ENCODE measurements at regions of chr22 and their contacts with region 1.

Region 1: GRCh38 chr22:39319270-39320022 is at the start of gene RPL3:
- DNase-seq: peak; percentile 96 to 100 (median 98)
- ATAC-seq: peak; percentile 85
- H3K4me3 ChIP-seq: peak within 1 kb of the TSS; percentile 91 to 99
- H3K4me3 Mint-ChIP-seq: peak within 1 kb of the TSS; percentile 96
- H3K27ac ChIP-seq: peak within 1 kb of the TSS; percentile 81 to 90
- H3K27ac Mint-ChIP-seq: peak within 1 kb of the TSS; percentile 96
- H3K4me1 ChIP-seq: peaks cover 45% of the 10 kb centered on the region
- H3K4me1 Mint-ChIP-seq: peaks cover 46% of the 10 kb centered on the region
- H3K27me3 ChIP-seq: no peaks in the 10 kb centered on the region
- H3K27me3 Mint-ChIP-seq: no peaks in the 10 kb centered on the region
- CTCF ChIP-seq: no peak
- total RNA-seq, gene RPL3: 3,777 to 3,874 TPM

Region 2: DNA sequence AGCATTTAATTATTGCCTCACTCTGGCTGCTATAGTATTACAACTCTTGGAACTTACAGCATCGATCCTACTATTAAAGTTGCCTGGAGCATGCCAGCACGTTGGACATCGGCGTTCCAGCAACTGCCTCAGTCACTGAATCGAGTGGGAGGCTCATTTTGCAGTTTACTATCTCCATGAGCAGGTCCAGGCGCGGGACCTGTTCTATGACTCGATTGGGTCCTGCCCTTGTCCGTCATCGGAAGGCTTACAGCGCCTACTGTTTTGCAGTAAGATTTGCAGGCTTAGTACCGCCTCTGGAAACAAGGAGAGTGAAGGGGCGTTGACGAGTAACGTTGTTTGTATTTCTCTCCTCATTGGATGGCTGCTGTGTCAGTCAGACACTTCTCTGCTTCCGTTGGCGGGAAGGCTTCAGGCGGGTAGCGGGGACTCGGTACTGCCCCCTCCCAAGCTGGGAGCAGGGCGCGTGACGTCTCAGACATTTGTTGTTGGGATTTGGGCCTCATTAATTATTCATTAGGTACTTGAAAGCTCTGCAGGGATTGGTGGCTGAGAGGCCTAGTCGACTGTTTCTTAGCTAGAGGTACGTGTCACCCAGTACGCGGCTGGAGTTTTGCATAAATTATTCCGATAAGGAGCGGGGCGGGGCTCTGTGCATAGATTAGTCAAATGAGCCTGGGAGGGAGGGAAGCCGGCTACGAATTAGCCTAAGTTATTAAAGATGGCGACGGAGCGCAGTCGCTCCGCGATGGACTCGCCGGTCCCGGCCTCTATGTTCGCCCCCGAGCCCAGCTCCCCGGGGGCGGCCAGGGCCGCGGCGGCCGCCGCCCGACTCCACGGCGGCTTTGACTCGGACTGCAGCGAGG is 614.0 kb before region 1 on chr22 and contains the start of gene GTPBP1:
- CTCF ChIA-PET with region 1: interaction called, 3 read pairs
- POLR2A ChIA-PET with region 1: interaction called, 4 read pairs
- intact Hi-C with region 1: loop called in 1 of 2 experiments (anchors 2 kb)
- DNase-seq: peak; percentile 91 to 100 (median 95)
- ATAC-seq: peak; percentile 76
- H3K4me3 ChIP-seq: peak within 1 kb of the TSS; percentile 63 to 84
- H3K4me3 Mint-ChIP-seq: peak within 1 kb of the TSS; percentile 93
- H3K27ac ChIP-seq: peak within 1 kb of the TSS; percentile 69 to 77
- H3K27ac Mint-ChIP-seq: peak within 1 kb of the TSS; percentile 95
- H3K4me1 ChIP-seq: peaks cover 47% of the 10 kb centered on the region
- H3K4me1 Mint-ChIP-seq: peaks cover 64% of the 10 kb centered on the region
- H3K27me3 ChIP-seq: no peaks in the 10 kb centered on the region
- H3K27me3 Mint-ChIP-seq: no peaks in the 10 kb centered on the region
- CTCF ChIP-seq: no peak
- total RNA-seq, gene GTPBP1: 341 to 346 TPM

Region 3: GRCh38 chr22:39144101-39144767 is 175.2 kb before region 1 on chr22:
- CTCF ChIA-PET with region 1: interaction called, 3 read pairs
- POLR2A ChIA-PET with region 1: interaction called, 14 read pairs
- intact Hi-C with region 1: loop called in 1 of 2 experiments (anchors 1 kb)
- DNase-seq: peak in 8 of 9 experiments; percentile 38 to 91 (median 64)
- ATAC-seq: peak; percentile 39
- H3K4me3 ChIP-seq: peak overlapping the region; percentile 72 to 99
- H3K4me3 Mint-ChIP-seq: peak overlapping the region; percentile 92
- H3K27ac ChIP-seq: peak overlapping the region; percentile 79 to 90
- H3K27ac Mint-ChIP-seq: peak overlapping the region; percentile 93
- H3K4me1 ChIP-seq: peaks cover 33% of the 10 kb centered on the region
- H3K4me1 Mint-ChIP-seq: peaks cover 46% of the 10 kb centered on the region
- H3K27me3 ChIP-seq: no peaks in the 10 kb centered on the region
- H3K27me3 Mint-ChIP-seq: no peaks in the 10 kb centered on the region
- CTCF ChIP-seq: no peak

Region 4: GRCh38 chr22:39240828-39241793 is 78.3 kb before region 1 on chr22:
- CTCF ChIA-PET with region 1: interaction called, 16 read pairs
- POLR2A ChIA-PET with region 1: interaction called, 14 read pairs
- intact Hi-C with region 1: loop called (anchors 1 to 2 kb)
- DNase-seq: peak in 6 of 9 experiments; percentile 14 to 76 (median 60)
- ATAC-seq: peak; percentile 9
- H3K4me3 ChIP-seq: peak overlapping the region; percentile 17 to 44
- H3K4me3 Mint-ChIP-seq: peak overlapping the region; percentile 93
- H3K27ac ChIP-seq: peak overlapping the region; percentile 21 to 54
- H3K27ac Mint-ChIP-seq: peak overlapping the region; percentile 95
- H3K4me1 ChIP-seq: peaks cover 60% of the 10 kb centered on the region
- H3K4me1 Mint-ChIP-seq: peaks cover 65% of the 10 kb centered on the region
- H3K27me3 ChIP-seq: peaks cover 3 to 20% of the 10 kb centered on the region in 2 experiments
- H3K27me3 Mint-ChIP-seq: peaks cover 2% of the 10 kb centered on the region
- CTCF ChIP-seq: no peak

Region 5: GRCh38 chr22:39349506-39349966 is 30.1 kb after region 1 on chr22:
- CTCF ChIA-PET with region 1: interaction called, 3 read pairs
- POLR2A ChIA-PET with region 1: interaction called, 14 read pairs
- intact Hi-C with region 1: loop called in 1 of 2 experiments (anchors 1 kb)
- DNase-seq: peak in 5 of 9 experiments; percentile 16 to 75 (median 59)
- ATAC-seq: peak; percentile 59
- H3K4me3 ChIP-seq: peak overlapping the region; percentile 63 to 64
- H3K4me3 Mint-ChIP-seq: peak overlapping the region; percentile 89
- H3K27ac ChIP-seq: peak overlapping the region; percentile 51 to 69
- H3K27ac Mint-ChIP-seq: peak overlapping the region; percentile 83
- H3K4me1 ChIP-seq: peaks cover 33% of the 10 kb centered on the region
- H3K4me1 Mint-ChIP-seq: peaks cover 18% of the 10 kb centered on the region
- H3K27me3 ChIP-seq: peaks cover 0 to 5% of the 10 kb centered on the region in 2 experiments
- H3K27me3 Mint-ChIP-seq: peaks cover 2% of the 10 kb centered on the region
- CTCF ChIP-seq: no peak

Region 6: DNA sequence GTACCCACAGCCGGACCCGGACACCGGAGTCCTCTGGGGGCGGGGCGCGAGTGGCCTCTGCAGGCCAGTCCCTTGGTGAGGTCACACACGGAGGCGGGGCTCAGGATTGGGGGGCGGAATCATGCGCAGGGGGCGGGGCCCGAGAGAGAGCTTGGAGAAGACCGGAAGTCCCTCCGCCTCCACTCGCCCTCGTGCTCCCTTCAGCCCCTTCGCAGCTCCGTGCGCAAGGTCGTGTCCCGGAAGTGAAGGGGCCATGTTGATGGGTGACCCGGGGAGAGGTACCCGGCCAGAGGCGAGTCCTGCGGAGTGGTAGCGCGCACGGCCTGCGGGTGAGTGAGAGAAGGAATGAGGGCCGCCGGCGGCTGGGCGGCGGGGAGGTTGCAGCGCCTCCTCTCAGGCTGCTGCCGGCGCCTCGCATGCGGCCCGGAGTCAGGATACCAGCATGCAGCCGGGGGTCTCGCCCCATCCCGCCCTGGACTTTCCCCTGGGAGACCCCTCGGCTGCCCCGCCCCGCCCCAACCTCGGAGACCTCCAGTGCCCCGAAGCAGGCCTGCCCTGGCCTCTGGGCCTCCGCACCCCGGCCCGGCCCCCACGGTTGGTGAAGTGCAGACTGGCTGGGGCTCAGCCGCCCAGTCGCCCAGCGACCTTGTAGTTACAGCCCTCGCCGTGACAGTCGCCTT is 182.8 kb after region 1 on chr22 and contains the start of gene MIEF1:
- CTCF ChIA-PET with region 1: no interaction called
- POLR2A ChIA-PET with region 1: interaction called, 10 read pairs
- intact Hi-C with region 1: no loop called
- DNase-seq: peak; percentile 67 to 96 (median 88)
- ATAC-seq: peak; percentile 94
- H3K4me3 ChIP-seq: peak within 1 kb of the TSS; percentile 66 to 80
- H3K4me3 Mint-ChIP-seq: peak within 1 kb of the TSS; percentile 97
- H3K27ac ChIP-seq: peak within 1 kb of the TSS; percentile 64 to 80
- H3K27ac Mint-ChIP-seq: peak within 1 kb of the TSS; percentile 92
- H3K4me1 ChIP-seq: peaks cover 30% of the 10 kb centered on the region
- H3K4me1 Mint-ChIP-seq: peaks cover 41% of the 10 kb centered on the region
- H3K27me3 ChIP-seq: no peaks in the 10 kb centered on the region
- H3K27me3 Mint-ChIP-seq: no peaks in the 10 kb centered on the region
- CTCF ChIP-seq: no peak
- total RNA-seq, gene MIEF1: 24.8 to 25.3 TPM